Activated CD4-positive, alpha-beta T cell treated with anti-CD3 and anti-CD28 coated beads for 36 hours (primary cell): ENCODE measurements at regions of chr12 and their contacts with region 1.

Region 1: DNA sequence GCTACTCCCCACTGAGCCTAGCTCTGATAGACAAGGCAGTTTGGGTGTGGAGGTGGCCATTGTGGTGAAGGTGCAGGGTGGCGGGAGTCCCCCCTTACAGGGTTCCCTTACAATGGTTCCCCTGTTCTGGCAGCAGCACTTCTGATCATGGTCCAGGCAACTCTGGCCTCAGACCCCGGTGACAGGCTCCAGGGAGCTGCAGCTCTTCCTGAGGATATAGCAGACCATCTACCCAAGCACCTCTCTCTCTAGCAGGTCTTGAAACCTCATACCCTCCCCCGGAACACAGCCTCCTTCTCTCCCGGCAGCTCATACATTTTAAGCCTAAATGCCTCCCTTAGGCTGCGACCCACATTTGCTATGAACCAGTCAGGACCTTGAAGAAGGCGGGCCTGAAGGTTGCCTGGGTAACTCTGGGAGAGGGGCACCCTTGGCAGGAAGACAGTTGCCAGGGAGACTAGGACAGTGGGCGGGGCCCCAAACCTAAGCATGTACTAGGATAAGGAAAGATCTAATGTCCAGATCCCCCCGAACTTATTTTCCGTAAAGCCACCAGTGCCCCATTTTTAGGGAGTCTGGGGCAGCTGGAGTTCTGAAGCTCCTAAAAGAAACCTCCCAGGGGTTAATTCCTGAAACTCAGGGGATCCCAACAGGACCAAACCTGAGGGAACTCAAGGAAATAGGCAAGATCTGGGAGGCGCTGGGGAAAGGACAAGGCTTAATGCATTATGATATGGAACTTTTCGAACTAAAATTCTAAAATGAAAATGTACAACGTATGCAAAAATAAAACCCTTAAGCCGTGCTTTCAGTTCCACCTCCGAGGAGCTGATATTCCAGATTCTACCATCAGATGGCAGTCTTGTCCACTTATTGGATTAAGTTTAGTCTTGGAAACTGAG is 4.5 kb upstream of the GDF11 start:
- DNase-seq: peak; percentile 88
- ATAC-seq: peak; percentile 82
- H3K4me3 Mint-ChIP-seq: peak overlapping the region; percentile 68
- H3K27ac Mint-ChIP-seq: peak overlapping the region; percentile 76
- H3K4me1 Mint-ChIP-seq: peaks cover 23% of the 10 kb centered on the region
- H3K27me3 Mint-ChIP-seq: no peaks in the 10 kb centered on the region

Region 2: DNA sequence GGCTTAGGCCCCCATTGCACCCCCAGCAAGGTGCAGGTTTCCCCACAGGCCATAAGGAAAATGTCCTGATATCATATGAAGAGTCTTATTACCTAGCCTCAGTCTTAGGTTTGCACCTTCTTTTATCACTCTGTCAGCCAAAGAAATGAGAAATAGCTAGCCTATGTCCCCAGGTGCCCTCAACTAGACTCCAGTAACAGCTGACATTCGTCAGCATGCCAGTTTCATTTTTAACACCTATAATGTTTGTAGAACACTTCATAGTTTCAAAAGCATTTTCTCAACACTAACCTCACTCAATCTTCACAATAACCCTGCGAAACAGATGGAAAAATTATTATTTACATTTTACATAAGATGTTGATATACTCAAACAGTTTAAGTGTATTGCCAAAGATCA is 125.7 kb before region 1 on chr12:
- CTCF ChIA-PET with region 1: no interaction called
- POLR2A ChIA-PET with region 1: no interaction called
- intact Hi-C with region 1: no loop called
- DNase-seq: no peak
- ATAC-seq: no peak
- H3K4me3 Mint-ChIP-seq: no peak overlapping the region
- H3K27ac Mint-ChIP-seq: no peak overlapping the region
- H3K4me1 Mint-ChIP-seq: peaks cover 13% of the 10 kb centered on the region
- H3K27me3 Mint-ChIP-seq: peaks cover 26% of the 10 kb centered on the region

Region 3: DNA sequence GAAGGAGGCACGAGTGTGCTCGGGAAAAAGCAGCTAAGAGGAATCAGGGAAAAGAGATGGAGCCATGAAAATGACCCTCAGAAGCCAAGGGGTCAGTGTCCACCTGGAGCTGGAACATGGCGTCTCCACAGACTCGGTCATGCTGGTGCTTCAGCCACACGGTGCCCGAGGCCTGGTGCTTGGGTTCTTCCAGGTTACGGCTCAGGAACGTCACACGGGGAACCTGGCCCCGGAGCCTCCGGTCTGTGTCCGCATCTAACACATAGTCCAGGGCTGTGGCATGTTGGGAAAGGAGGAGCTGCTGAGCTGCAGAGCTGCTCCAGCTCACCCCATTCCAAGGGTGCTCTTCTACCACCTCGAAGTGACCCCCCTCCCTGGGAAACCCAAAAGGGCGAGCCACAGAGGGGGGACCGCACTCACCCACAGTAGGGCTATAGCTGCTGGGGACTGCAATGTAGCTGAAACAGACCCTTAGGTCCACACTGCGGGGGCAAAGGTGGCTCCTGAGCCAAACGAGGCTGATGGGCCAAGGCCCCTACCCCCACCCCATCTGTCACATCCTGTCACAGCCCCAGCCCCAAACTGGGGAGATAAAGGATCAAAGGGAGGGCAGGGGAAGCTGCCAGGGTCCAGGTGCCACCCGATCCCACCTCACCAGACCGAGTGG is 41.4 kb before region 1 on chr12:
- CTCF ChIA-PET with region 1: no interaction called
- POLR2A ChIA-PET with region 1: no interaction called
- intact Hi-C with region 1: no loop called
- DNase-seq: no peak
- ATAC-seq: no peak
- H3K4me3 Mint-ChIP-seq: no peak overlapping the region
- H3K27ac Mint-ChIP-seq: no peak overlapping the region
- H3K4me1 Mint-ChIP-seq: no peaks in the 10 kb centered on the region
- H3K27me3 Mint-ChIP-seq: no peaks in the 10 kb centered on the region

Region 4: GRCh38 chr12:55715833-55716581 is 22.4 kb before region 1 on chr12 and contains the start of gene BLOC1S1:
- CTCF ChIA-PET with region 1: interaction called, 67 read pairs
- POLR2A ChIA-PET with region 1: interaction called, 3 read pairs
- intact Hi-C with region 1: loop called in 1 of 2 experiments (anchors 1 kb)
- DNase-seq: peak; percentile 97
- ATAC-seq: peak; percentile 94
- H3K4me3 Mint-ChIP-seq: peak within 1 kb of the TSS; percentile 86
- H3K27ac Mint-ChIP-seq: peak within 1 kb of the TSS; percentile 89
- H3K4me1 Mint-ChIP-seq: peaks cover 30% of the 10 kb centered on the region
- H3K27me3 Mint-ChIP-seq: peaks cover 2% of the 10 kb centered on the region
- total RNA-seq, gene BLOC1S1: 107 to 115 TPM

Region 5: GRCh38 chr12:55817346-55818139 is 79.2 kb after region 1 on chr12 and contains the starts of genes ORMDL2 and SARNP:
- CTCF ChIA-PET with region 1: interaction called, 25 read pairs
- POLR2A ChIA-PET with region 1: interaction called, 5 read pairs
- intact Hi-C with region 1: loop called (anchors 1 kb)
- DNase-seq: peak; percentile 97
- ATAC-seq: peak; percentile 98
- H3K4me3 Mint-ChIP-seq: no peak within 1 kb of the TSS
- H3K27ac Mint-ChIP-seq: no peak within 1 kb of the TSS
- H3K4me1 Mint-ChIP-seq: peaks cover 49% of the 10 kb centered on the region
- H3K27me3 Mint-ChIP-seq: no peaks in the 10 kb centered on the region
- total RNA-seq, gene ORMDL2: 29.4 to 35.6 TPM
- total RNA-seq, gene SARNP: 111 to 114 TPM

Region 6: DNA sequence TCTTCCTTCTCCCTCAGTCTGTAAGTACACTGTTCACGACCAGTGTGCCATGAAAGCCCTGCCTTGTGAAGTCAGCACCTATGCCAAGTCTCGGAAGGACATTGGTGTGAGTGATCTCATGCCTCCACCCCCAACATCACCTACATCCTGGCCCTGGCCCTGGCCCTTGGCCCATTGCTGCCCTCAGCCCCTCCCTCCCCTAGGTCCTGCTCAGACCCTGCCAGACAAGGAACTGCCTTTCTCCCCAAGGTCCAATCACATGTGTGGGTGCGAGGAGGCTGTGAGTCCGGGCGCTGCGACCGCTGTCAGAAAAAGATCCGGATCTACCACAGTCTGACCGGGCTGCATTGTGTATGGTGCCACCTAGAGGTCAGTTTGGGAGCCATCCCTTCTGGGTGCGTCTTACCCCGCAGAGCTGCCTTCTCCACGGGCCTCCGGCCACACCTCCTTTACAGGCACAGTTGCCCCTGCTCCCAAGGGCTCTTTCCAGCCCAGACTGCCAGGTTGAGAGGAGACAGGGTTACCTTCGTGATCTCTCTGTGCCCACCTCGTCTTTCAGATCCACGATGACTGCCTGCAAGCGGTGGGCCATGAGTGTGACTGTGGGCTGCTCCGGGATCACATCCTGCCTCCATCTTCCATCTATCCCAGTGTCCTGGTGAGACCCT is 201.8 kb after region 1 on chr12:
- CTCF ChIA-PET with region 1: interaction called, 69 read pairs
- POLR2A ChIA-PET with region 1: interaction called, 3 read pairs
- intact Hi-C with region 1: loop called (anchors 1 to 2 kb)
- DNase-seq: peak; percentile 90
- ATAC-seq: peak; percentile 77
- H3K4me3 Mint-ChIP-seq: peak overlapping the region; percentile 1
- H3K27ac Mint-ChIP-seq: peak overlapping the region; percentile 58
- H3K4me1 Mint-ChIP-seq: peaks cover 75% of the 10 kb centered on the region
- H3K27me3 Mint-ChIP-seq: no peaks in the 10 kb centered on the region

Region 7: GRCh38 chr12:56020423-56021184 is 282.2 kb after region 1 on chr12 and contains the start of gene IKZF4:
- CTCF ChIA-PET with region 1: interaction called, 10 read pairs
- POLR2A ChIA-PET with region 1: no interaction called
- intact Hi-C with region 1: no loop called
- DNase-seq: peak; percentile 60
- ATAC-seq: peak; percentile 48
- H3K4me3 Mint-ChIP-seq: peak within 1 kb of the TSS; percentile 80
- H3K27ac Mint-ChIP-seq: peak within 1 kb of the TSS; percentile 95
- H3K4me1 Mint-ChIP-seq: peaks cover 24% of the 10 kb centered on the region
- H3K27me3 Mint-ChIP-seq: no peaks in the 10 kb centered on the region
- total RNA-seq, gene IKZF4: 14.9 to 16.3 TPM

Region 8: GRCh38 chr12:56224102-56224701 is 485.8 kb after region 1 on chr12 and contains the start of gene NABP2:
- CTCF ChIA-PET with region 1: interaction called, 4 read pairs
- POLR2A ChIA-PET with region 1: no interaction called
- intact Hi-C with region 1: loop called in 1 of 2 experiments (anchors 2 kb)
- DNase-seq: peak; percentile 98
- ATAC-seq: peak; percentile 83
- H3K4me3 Mint-ChIP-seq: peak within 1 kb of the TSS; percentile 98
- H3K27ac Mint-ChIP-seq: peak within 1 kb of the TSS; percentile 88
- H3K4me1 Mint-ChIP-seq: peaks cover 37% of the 10 kb centered on the region
- H3K27me3 Mint-ChIP-seq: no peaks in the 10 kb centered on the region
- total RNA-seq, gene NABP2: 69.1 to 76.0 TPM